ENCODE measurements at regions of chr11 and their contacts with region 1.

Region 1: DNA sequence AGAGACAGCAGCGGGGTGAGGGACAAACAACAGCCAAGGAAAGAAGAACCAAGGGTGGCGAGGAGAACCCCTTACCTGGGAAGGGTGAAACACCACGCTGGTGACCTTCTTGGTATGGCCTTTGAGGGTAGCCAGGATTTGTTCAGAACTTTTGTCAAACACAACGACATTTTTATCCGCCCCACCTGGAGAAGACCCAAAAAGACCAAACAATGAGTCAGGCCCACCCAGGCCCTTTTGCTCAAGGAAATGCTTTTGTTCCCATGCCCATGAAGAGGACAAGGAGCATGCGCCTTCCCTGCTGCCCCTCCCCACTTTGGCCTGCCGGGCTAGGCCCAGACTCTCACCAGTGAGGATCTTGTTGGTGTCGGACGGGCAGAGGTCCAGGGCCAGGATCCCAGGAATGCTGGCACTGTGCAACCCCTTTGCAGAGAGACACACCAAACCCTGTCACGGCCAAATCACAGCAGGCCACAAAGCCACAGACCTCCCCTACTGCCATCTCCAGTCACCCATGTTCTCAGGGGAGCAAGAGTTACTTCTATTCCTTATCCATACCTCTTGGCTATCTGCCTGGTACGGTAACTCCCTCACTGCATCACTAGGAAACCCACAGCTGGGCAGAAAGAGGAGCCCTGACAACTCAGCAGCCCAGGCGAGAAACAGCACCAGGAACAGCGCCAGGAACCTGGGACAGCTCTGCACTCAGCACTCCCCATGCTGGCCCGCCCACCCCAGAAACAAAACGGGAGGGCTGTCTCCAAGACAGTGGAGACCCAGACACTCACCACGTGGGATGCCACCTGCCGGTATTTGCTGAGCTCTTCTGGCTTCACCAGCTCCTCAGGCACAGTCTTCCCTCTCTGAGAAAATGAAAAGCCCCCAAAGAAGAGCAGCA is 5.6 kb downstream of the PRPF19 start:
- DNase-seq: no peak
- H3K4me3 ChIP-seq: no peak overlapping the region
- CTCF ChIP-seq: no peak
- POLR2A ChIP-seq: no peak

Region 2: GRCh38 chr11:60831143-60831500 is 69.6 kb before region 1 on chr11:
- intact Hi-C with region 1: loop called (anchors 5 kb)
- DNase-seq: peak; percentile 72 to 96
- H3K4me3 ChIP-seq: no peak overlapping the region
- CTCF ChIP-seq: peak in 1 of 3 donors; percentile 59
- POLR2A ChIP-seq: no peak

Region 3: GRCh38 chr11:61445516-61445915 is 544.8 kb after region 1 on chr11:
- intact Hi-C with region 1: no loop called
- DNase-seq: no peak
- H3K4me3 ChIP-seq: no peak overlapping the region
- CTCF ChIP-seq: no peak
- POLR2A ChIP-seq: no peak